ENCODE measurements at regions of chr15 and their contacts with region 1.

Region 1: GRCh38 chr15:48861813-48862431 is 16.0 kb upstream of the EID1 start:
- DNase-seq: peak in 2 of 4 donors; percentile 17 to 25
- ATAC-seq: peak; percentile 58
- H3K4me3 ChIP-seq: no peak overlapping the region
- H3K27ac ChIP-seq: no peak overlapping the region
- H3K4me1 ChIP-seq: peaks cover 12% of the 10 kb centered on the region
- H3K27me3 ChIP-seq: no peaks in the 10 kb centered on the region
- CTCF ChIP-seq: peak; percentile 71 to 91 (median 83)
- POLR2A ChIP-seq: no peak

Region 2: GRCh38 chr15:50144341-50145120 is 1282.6 kb after region 1 on chr15:
- intact Hi-C with region 1: loop called (anchors 5 kb)
- DNase-seq: no peak
- ATAC-seq: no peak
- H3K4me3 ChIP-seq: no peak overlapping the region
- H3K27ac ChIP-seq: no peak overlapping the region
- H3K4me1 ChIP-seq: no peaks in the 10 kb centered on the region
- H3K27me3 ChIP-seq: no peaks in the 10 kb centered on the region
- CTCF ChIP-seq: no peak
- POLR2A ChIP-seq: no peak

Measured in body of pancreas (tissue), 4 donors.